Dendritic cell treated with granulocyte-macrophage colony-stimulating factor and Interleukin-4, amounts not matched to agents 40 ng/mL and 50 ng/mL, for 4 days (primary cell): ENCODE measurements at regions of chr6 and their contacts with region 1.

Region 1: GRCh38 chr6:42661540-42662153 is 60.8 kb downstream of the PRPH2 start:
- H3K4me3 Mint-ChIP-seq: no peak overlapping the region
- H3K27ac Mint-ChIP-seq: no peak overlapping the region
- H3K4me1 Mint-ChIP-seq: no peaks in the 10 kb centered on the region
- H3K27me3 Mint-ChIP-seq: no peaks in the 10 kb centered on the region

Region 2: DNA sequence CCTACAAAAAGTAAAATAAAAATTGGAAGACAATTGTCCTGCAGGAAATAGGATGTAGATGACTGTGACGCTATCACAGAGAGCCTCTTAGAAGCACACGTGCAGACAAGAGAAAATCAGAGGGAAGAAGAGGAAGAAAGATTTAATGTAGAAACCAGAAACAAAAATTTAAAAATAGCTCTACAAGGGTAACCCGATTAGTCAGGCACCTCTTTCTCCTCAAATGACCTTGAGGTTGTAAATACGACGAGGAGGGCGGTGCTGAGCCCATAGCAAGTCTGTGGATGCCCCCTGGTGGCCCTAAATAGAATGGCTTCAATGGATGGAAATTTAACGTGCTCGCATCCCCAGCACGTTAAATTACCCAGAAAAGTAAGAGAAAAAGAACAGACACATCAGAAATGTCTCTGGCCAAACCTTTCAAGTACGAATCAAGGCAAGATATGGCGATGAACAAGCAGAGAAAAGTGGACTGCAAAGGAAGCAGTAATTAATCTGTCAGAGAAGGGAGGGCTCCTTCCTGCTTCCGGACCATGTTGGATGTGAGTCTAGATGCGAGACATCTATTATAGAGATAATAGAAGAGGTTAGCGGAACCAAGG is 64.9 kb after region 1 on chr6:
- intact Hi-C with region 1: loop called (anchors 1 kb)
- H3K4me3 Mint-ChIP-seq: peak overlapping the region; percentile 86
- H3K27ac Mint-ChIP-seq: peak overlapping the region; percentile 90
- H3K4me1 Mint-ChIP-seq: peaks cover 19% of the 10 kb centered on the region
- H3K27me3 Mint-ChIP-seq: peaks cover 10% of the 10 kb centered on the region

Region 3: GRCh38 chr6:42879372-42880239 is 218.0 kb after region 1 on chr6 and contains the start of gene RPL7L1:
- intact Hi-C with region 1: loop called (anchors 1 kb)
- H3K4me3 Mint-ChIP-seq: peak within 1 kb of the TSS; percentile 99
- H3K27ac Mint-ChIP-seq: peak within 1 kb of the TSS; percentile 98
- H3K4me1 Mint-ChIP-seq: peaks cover 6% of the 10 kb centered on the region
- H3K27me3 Mint-ChIP-seq: no peaks in the 10 kb centered on the region

Region 4: DNA sequence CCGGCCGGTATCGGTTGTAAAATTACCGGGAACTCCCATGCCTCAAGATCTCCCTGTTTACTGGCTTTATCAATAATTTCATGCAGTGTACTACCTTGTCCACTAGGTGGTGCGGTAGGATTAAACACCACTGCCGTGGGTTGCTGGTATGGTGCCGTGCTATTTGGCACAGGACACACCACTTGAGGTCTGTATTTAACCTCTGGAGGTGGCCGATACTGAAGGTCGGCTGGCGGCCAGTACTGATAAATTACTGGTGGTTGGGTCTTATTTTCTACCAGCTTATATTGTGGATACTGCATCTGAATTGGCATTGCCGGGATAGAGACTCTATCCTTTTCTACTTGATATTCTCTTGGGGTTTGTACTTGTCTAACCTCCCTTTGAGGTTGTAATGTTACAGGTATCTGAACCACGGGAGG is 239.9 kb after region 1 on chr6:
- intact Hi-C with region 1: loop called (anchors 5 kb)
- H3K4me3 Mint-ChIP-seq: no peak overlapping the region
- H3K27ac Mint-ChIP-seq: no peak overlapping the region
- H3K4me1 Mint-ChIP-seq: peaks cover 21% of the 10 kb centered on the region
- H3K27me3 Mint-ChIP-seq: no peaks in the 10 kb centered on the region